H1 (cell line): ENCODE measurements at regions of chr22 and their contacts with region 1.

Region 1: GRCh38 chr22:41327124-41327523 is 25.8 kb downstream of the ZC3H7B start:
- DNase-seq: no peak
- H3K4me3 ChIP-seq: no peak overlapping the region
- H3K27ac ChIP-seq: no peak overlapping the region
- H3K4me1 ChIP-seq: no peaks in the 10 kb centered on the region
- H3K27me3 ChIP-seq: no peaks in the 10 kb centered on the region
- CTCF ChIP-seq: no peak
- EP300 ChIP-seq: no peak
- POLR2A ChIP-seq: no peak
- RAD21 ChIP-seq: no peak

Region 2: GRCh38 chr22:41308054-41308453 is 19.1 kb before region 1 on chr22:
- CTCF ChIA-PET with region 1: no interaction called
- POLR2A ChIA-PET with region 1: interaction called, 16 read pairs
- DNase-seq: no peak
- H3K4me3 ChIP-seq: no peak overlapping the region
- H3K27ac ChIP-seq: no peak overlapping the region
- H3K4me1 ChIP-seq: peaks cover 0 to 7% (median 5%) of the 10 kb centered on the region in 4 experiments; a peak in 4 of 7 replicates
- H3K27me3 ChIP-seq: no peaks in the 10 kb centered on the region
- CTCF ChIP-seq: no peak
- EP300 ChIP-seq: no peak
- POLR2A ChIP-seq: no peak
- RAD21 ChIP-seq: no peak